ENCODE measurements at regions of chr6 and their contacts with region 1.

Region 1: DNA sequence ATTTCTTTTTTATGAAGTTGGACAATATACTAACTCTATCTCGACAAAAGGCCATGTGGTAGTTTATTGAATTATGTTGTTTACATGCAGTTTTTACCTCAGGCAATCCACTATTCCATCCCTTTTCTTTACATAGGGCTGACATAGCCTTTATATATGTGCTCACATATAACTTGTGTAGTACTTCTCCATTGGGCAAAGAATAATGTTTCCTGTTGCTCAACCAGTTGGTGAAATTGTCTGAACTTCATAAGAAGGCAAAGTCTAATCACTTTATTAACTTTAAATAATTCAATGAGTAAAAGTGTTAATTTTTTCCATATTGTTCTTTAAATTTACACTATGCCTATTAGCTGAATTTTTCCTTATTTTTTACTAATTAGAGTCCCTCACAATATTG is 1272.1 kb downstream of the EPHA7 start:
- DNase-seq: no peak
- H3K4me3 ChIP-seq: no peak overlapping the region
- H3K27ac ChIP-seq: no peak overlapping the region
- H3K4me1 ChIP-seq: no peaks in the 10 kb centered on the region
- H3K27me3 ChIP-seq: no peaks in the 10 kb centered on the region
- CTCF ChIP-seq: no peak
- POLR2A ChIP-seq: no peak

Region 2: DNA sequence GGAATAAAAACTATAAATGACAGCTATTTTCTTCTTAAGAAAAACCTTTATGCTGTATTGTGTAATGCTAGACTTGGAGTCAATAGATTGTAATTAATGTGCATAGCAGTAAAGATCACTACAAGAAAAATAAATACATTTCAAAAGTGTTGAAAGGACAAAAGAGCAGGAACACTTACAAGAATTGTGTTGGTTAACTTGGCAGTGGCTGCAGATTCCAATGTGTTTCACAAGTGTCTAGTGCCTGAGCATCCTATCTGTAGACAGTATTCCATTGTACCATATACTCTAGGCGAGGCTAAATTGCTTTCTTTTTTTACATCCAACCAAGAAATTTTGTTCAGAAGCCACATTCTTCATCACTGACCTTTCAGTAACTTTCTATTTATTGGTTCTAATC is 348.0 kb after region 1 on chr6:
- intact Hi-C with region 1: no loop called
- DNase-seq: peak in 1 of 2 donors; percentile 26
- H3K4me3 ChIP-seq: no peak overlapping the region
- H3K27ac ChIP-seq: no peak overlapping the region
- H3K4me1 ChIP-seq: no peaks in the 10 kb centered on the region
- H3K27me3 ChIP-seq: no peaks in the 10 kb centered on the region
- CTCF ChIP-seq: no peak
- POLR2A ChIP-seq: no peak

Region 3: DNA sequence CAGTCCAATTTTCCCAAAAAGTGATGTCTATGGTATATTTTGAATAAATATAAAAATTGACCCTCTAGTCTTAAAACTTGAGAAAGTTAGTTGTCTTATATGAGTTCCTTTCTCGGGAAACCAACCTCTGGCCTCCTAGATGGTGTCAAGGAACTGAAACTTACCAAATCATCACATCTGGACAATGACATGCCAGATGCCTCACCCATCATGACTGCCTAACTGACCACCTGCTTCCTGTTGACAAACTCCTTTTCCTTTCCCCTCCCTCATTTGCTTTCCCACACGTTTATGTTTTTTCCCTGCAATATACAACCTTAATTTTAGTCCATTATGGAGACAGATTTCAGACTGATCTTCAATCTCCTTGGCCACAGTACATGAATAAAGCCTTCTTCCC is 541.1 kb after region 1 on chr6:
- intact Hi-C with region 1: loop called (anchors 10 kb)
- DNase-seq: no peak
- H3K4me3 ChIP-seq: no peak overlapping the region
- H3K27ac ChIP-seq: no peak overlapping the region
- H3K4me1 ChIP-seq: no peaks in the 10 kb centered on the region
- H3K27me3 ChIP-seq: no peaks in the 10 kb centered on the region
- CTCF ChIP-seq: no peak
- POLR2A ChIP-seq: no peak